ENCODE measurements at regions of chr11 and their contacts with region 1.

Region 1: DNA sequence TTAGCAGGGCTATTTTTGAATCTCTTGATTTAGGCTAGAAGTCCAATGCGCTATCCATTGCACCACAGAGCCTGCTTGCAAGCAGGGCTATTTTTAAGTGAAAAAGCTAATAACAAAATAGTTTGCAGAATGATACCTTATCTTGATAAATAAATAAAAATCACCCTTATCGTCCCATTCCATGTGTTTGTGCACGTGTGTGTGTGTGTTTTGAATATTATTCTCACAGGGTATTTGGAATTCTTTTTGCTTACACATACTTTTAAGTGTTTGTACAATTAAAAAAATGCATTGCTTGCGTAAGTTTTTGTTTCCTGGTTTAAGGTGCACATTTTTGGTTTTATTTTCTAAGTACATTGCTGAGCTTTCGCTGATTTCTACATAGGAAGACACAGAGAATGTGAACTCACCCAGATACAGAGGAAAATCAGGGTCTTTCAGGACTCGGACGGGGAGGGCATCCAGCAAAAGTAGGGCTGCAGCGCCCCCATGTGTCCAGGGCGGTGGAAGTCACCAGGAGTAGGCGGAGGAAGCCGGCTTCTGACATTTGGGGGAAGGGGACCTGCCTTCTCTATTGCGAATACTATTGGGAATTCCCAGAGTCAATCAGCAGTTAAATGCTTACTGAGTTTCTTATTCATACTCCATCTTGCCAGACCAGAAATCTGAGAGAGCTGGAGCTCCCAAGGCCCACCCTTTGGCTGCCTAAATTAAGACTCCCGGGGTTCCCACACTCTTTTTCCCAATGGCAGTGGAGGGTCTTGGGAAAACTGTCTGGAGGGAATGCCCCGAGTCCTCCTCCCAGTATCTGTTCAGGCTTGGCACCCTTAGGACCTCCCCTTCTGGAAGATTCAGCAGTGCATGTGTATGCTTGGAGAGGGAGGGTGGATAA is 27.2 kb downstream of the SLC1A2 start:
- DNase-seq: peak; percentile 75 to 94 (median 82)
- ATAC-seq: peak; percentile 75
- H3K4me3 ChIP-seq: no peak overlapping the region
- H3K4me3 Mint-ChIP-seq: peak overlapping the region; percentile 35
- H3K27ac ChIP-seq: no peak overlapping the region
- H3K27ac Mint-ChIP-seq: no peak overlapping the region
- H3K4me1 ChIP-seq: peaks cover 5% of the 10 kb centered on the region
- H3K4me1 Mint-ChIP-seq: peaks cover 17% of the 10 kb centered on the region
- H3K27me3 ChIP-seq: peaks cover 0 to 3% of the 10 kb centered on the region in 2 experiments
- H3K27me3 Mint-ChIP-seq: no peaks in the 10 kb centered on the region
- CTCF ChIP-seq: peak; percentile 94

Region 2: GRCh38 chr11:34585735-34586487 is 806.3 kb before region 1 on chr11:
- CTCF ChIA-PET with region 1: interaction called, 52 read pairs
- POLR2A ChIA-PET with region 1: no interaction called
- intact Hi-C with region 1: loop called (anchors 1 kb)
- DNase-seq: peak in 2 of 9 experiments; percentile 53 to 60
- ATAC-seq: no peak
- H3K4me3 ChIP-seq: no peak overlapping the region
- H3K4me3 Mint-ChIP-seq: no peak overlapping the region
- H3K27ac ChIP-seq: no peak overlapping the region
- H3K27ac Mint-ChIP-seq: no peak overlapping the region
- H3K4me1 ChIP-seq: no peaks in the 10 kb centered on the region
- H3K4me1 Mint-ChIP-seq: peaks cover 5% of the 10 kb centered on the region
- H3K27me3 ChIP-seq: no peaks in the 10 kb centered on the region
- H3K27me3 Mint-ChIP-seq: peaks cover 30% of the 10 kb centered on the region
- CTCF ChIP-seq: peak; percentile 78

Region 3: DNA sequence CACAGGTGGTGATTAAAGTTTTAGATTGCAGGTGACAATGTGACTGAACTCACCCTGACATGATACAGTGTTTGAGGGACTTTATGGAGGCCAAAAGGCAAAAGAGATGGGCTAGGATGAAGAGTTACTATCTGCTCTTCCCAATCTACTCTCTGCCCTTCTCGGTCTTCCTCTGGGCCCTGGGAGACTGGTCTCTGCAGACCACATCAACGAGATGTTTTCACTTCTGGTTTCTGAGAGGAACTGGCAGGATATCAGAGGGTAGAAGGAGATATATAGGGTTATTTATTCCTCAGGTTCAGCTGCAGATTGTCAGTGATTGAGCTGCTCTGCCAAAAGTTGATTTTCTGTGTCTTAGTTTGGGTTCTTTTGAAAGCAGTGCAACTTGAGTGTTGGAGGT is 285.6 kb before region 1 on chr11:
- CTCF ChIA-PET with region 1: no interaction called
- POLR2A ChIA-PET with region 1: no interaction called
- intact Hi-C with region 1: loop called in 1 of 2 experiments (anchors 10 kb)
- DNase-seq: peak in 1 of 9 experiments; percentile 31
- ATAC-seq: no peak
- H3K4me3 ChIP-seq: no peak overlapping the region
- H3K4me3 Mint-ChIP-seq: peak overlapping the region; percentile 20
- H3K27ac ChIP-seq: peak overlapping the region in 1 of 2 experiments; percentile 20
- H3K27ac Mint-ChIP-seq: peak overlapping the region; percentile 85
- H3K4me1 ChIP-seq: peaks cover 38% of the 10 kb centered on the region
- H3K4me1 Mint-ChIP-seq: peaks cover 53% of the 10 kb centered on the region
- H3K27me3 ChIP-seq: no peaks in the 10 kb centered on the region
- H3K27me3 Mint-ChIP-seq: no peaks in the 10 kb centered on the region
- CTCF ChIP-seq: no peak

Region 4: DNA sequence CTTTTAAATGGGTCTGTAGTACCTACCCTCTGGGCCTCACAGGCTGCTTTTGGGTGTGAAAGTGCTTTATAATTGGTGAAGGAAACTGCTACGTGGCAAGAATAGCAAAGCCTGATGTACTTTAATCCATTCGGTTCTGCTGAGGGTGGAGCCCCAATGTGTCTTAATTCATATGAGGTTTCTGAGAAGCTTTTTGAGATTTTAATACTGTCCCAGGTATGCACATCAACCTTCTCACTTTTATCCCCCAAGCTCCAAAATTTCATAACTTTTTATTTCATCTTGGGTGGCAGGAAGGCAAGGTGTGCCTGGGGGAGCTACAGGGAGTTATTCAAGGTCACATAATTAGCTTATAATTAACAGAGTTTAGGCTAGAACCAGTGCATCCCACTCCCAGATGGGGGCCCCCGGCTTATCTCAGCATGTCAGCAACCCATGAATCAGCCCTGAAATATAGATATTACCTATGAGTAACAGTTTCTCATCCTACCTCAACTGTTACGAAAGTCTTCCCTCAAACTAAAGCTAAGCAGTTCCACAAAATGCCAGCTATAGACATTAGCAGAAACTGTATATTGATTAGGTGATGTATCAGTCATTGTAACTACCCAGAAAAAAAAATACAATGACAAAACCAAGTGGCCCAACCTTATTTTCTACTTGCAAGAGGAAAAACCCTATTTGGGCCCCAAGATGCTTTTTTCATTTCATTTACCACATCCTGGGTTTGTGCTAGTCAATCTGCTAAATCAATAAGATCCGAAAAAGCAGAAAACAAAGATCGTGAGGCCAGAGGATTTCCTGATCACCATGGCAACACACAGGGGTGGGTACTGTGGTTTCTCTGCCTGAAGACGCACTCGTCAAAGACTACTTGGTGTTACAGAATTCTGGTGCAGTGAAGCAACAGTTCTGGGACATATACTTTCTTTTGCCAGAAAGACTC is 226.5 kb before region 1 on chr11:
- CTCF ChIA-PET with region 1: interaction called, 15 read pairs
- POLR2A ChIA-PET with region 1: no interaction called
- intact Hi-C with region 1: no loop called
- DNase-seq: peak; percentile 69 to 99 (median 87)
- ATAC-seq: peak; percentile 66
- H3K4me3 ChIP-seq: peak overlapping the region; percentile 31 to 34
- H3K4me3 Mint-ChIP-seq: peak overlapping the region; percentile 74
- H3K27ac ChIP-seq: peak overlapping the region; percentile 96 to 97
- H3K27ac Mint-ChIP-seq: peak overlapping the region; percentile 100
- H3K4me1 ChIP-seq: peaks cover 97% of the 10 kb centered on the region
- H3K4me1 Mint-ChIP-seq: peaks cover 100% of the 10 kb centered on the region
- H3K27me3 ChIP-seq: no peaks in the 10 kb centered on the region
- H3K27me3 Mint-ChIP-seq: no peaks in the 10 kb centered on the region
- CTCF ChIP-seq: no peak

Region 5: DNA sequence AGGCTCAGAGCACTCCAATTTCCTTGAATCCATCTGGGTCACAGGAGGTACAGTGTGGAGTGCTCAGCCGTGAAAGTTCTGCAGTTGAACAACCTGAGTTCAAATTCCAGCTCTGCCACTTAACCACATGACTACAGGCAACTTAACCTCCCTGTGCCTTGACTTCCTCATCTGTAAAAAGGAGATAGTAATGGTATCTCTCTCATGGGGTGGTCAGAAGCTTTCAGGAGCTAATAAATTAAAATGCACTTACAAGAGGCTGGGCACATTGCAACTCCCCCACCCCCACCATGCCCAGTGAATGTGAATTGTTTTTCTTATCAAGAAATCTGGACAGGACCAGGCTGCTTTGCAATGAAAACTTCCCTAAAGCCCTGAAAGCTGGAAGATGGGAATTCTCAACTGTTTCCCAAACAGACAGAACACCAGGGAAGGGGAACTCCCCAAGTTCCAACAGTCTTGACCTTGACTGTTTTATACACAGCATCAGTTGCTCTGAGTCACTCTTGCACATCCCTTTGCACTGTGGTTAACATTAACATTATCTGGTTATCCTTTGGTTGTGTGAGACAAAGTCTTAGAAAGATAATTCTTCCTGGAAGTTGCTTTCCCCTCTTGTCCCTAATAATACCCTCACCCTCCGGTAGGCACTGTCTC is 109.8 kb before region 1 on chr11:
- CTCF ChIA-PET with region 1: no interaction called
- POLR2A ChIA-PET with region 1: no interaction called
- intact Hi-C with region 1: no loop called
- DNase-seq: no peak
- ATAC-seq: no peak
- H3K4me3 ChIP-seq: no peak overlapping the region
- H3K4me3 Mint-ChIP-seq: no peak overlapping the region
- H3K27ac ChIP-seq: no peak overlapping the region
- H3K27ac Mint-ChIP-seq: no peak overlapping the region
- H3K4me1 ChIP-seq: no peaks in the 10 kb centered on the region
- H3K4me1 Mint-ChIP-seq: peaks cover 4% of the 10 kb centered on the region
- H3K27me3 ChIP-seq: no peaks in the 10 kb centered on the region
- H3K27me3 Mint-ChIP-seq: no peaks in the 10 kb centered on the region
- CTCF ChIP-seq: no peak

Region 6: GRCh38 chr11:35305670-35306382 is 86.3 kb before region 1 on chr11:
- CTCF ChIA-PET with region 1: interaction called, 43 read pairs
- POLR2A ChIA-PET with region 1: no interaction called
- intact Hi-C with region 1: loop called in 1 of 2 experiments (anchors 1 kb)
- DNase-seq: peak; percentile 18 to 76 (median 53)
- ATAC-seq: peak; percentile 73
- H3K4me3 ChIP-seq: peak overlapping the region; percentile 12 to 39
- H3K4me3 Mint-ChIP-seq: peak overlapping the region; percentile 79
- H3K27ac ChIP-seq: peak overlapping the region in 1 of 2 experiments; percentile 29
- H3K27ac Mint-ChIP-seq: peak overlapping the region; percentile 92
- H3K4me1 ChIP-seq: peaks cover 18% of the 10 kb centered on the region
- H3K4me1 Mint-ChIP-seq: peaks cover 16% of the 10 kb centered on the region
- H3K27me3 ChIP-seq: no peaks in the 10 kb centered on the region
- H3K27me3 Mint-ChIP-seq: no peaks in the 10 kb centered on the region
- CTCF ChIP-seq: peak; percentile 63

Region 7: GRCh38 chr11:35367491-35367890 is 24.7 kb before region 1 on chr11:
- CTCF ChIA-PET with region 1: interaction called, 15 read pairs
- POLR2A ChIA-PET with region 1: no interaction called
- intact Hi-C with region 1: no loop called
- DNase-seq: no peak
- ATAC-seq: no peak
- H3K4me3 ChIP-seq: no peak overlapping the region
- H3K4me3 Mint-ChIP-seq: no peak overlapping the region
- H3K27ac ChIP-seq: no peak overlapping the region
- H3K27ac Mint-ChIP-seq: no peak overlapping the region
- H3K4me1 ChIP-seq: no peaks in the 10 kb centered on the region
- H3K4me1 Mint-ChIP-seq: no peaks in the 10 kb centered on the region
- H3K27me3 ChIP-seq: no peaks in the 10 kb centered on the region
- H3K27me3 Mint-ChIP-seq: no peaks in the 10 kb centered on the region
- CTCF ChIP-seq: no peak